Ascending aorta (tissue), 2 donors: ENCODE measurements at regions of chr10 and their contacts with region 1.

Region 1: GRCh38 chr10:23314835-23315239 is 29.8 kb downstream of the C10orf67 start:
- DNase-seq: no peak
- H3K4me3 ChIP-seq: no peak overlapping the region
- H3K27ac ChIP-seq: no peak overlapping the region
- H3K4me1 ChIP-seq: no peaks in the 10 kb centered on the region
- H3K27me3 ChIP-seq: no peaks in the 10 kb centered on the region
- CTCF ChIP-seq: peak; percentile 45 to 70 (median 64)

Region 2: GRCh38 chr10:23253780-23254179 is 61.1 kb before region 1 on chr10:
- intact Hi-C with region 1: no loop called
- DNase-seq: no peak
- H3K4me3 ChIP-seq: no peak overlapping the region
- H3K27ac ChIP-seq: no peak overlapping the region
- H3K4me1 ChIP-seq: no peaks in the 10 kb centered on the region
- H3K27me3 ChIP-seq: no peaks in the 10 kb centered on the region
- CTCF ChIP-seq: no peak

Region 3: DNA sequence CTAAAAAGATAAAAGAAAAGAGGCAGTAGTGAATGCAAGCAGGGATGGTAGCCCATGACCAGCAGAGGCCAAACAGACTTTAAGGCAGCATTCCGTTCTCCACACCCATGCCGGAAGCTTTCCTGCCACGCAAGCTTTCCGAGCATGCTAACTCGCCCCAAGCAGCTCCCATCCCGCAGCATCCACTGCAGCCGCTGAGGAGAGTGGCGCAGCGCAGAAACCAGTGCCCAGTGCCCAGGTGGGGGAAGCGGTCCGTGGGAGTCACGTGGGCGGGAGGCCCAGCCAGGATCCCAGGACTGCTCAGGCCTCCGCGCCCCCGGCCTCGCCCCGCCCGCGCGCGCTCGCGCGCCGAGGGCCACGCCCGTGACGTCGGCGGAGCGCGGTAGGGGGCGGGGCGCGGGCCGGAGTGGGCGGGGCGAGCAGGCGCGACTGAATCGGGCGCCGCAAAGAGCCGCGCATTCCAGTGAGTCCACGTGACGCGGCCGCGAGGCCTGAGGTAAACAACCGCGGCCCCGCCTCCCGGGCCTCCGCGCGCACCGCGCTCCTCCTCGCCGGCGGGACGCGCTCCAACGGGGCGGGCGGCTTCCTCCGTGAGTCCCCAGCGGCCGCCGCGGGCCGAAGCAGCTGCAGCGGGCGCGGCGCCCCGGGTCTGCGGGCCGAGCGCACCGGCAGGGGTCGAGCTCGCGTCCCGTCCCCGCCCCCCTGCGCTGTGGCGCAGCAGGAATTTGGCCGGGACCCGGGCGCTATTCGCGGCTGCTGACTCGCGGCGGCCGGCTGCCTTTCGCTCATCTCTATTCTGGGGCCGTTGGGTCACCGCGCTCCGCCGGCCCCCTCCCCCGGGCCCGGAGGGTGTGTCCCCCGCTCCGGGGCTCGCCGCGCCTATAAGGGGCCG is 124.0 kb after region 1 on chr10 and contains the start of gene OTUD1:
- intact Hi-C with region 1: no loop called
- DNase-seq: peak; percentile 82 to 98
- H3K4me3 ChIP-seq: peak within 1 kb of the TSS; percentile 91 to 96
- H3K27ac ChIP-seq: peak within 1 kb of the TSS; percentile 88 to 93
- H3K4me1 ChIP-seq: peaks cover 0 to 24% of the 10 kb centered on the region in 2 donors
- H3K27me3 ChIP-seq: no peaks in the 10 kb centered on the region
- CTCF ChIP-seq: peak in 1 of 3 experiments; percentile 26
- total RNA-seq, gene OTUD1: 24.1 TPM

Region 4: GRCh38 chr10:23525406-23525805 is 210.6 kb after region 1 on chr10:
- intact Hi-C with region 1: loop called (anchors 1 kb)
- DNase-seq: no peak
- H3K4me3 ChIP-seq: no peak overlapping the region
- H3K27ac ChIP-seq: no peak overlapping the region
- H3K4me1 ChIP-seq: no peaks in the 10 kb centered on the region
- H3K27me3 ChIP-seq: no peaks in the 10 kb centered on the region
- CTCF ChIP-seq: peak; percentile 12 to 39 (median 24)

Region 5: GRCh38 chr10:23702977-23703414 is 388.2 kb after region 1 on chr10:
- intact Hi-C with region 1: loop called (anchors 2 kb)
- DNase-seq: no peak
- H3K4me3 ChIP-seq: no peak overlapping the region
- H3K27ac ChIP-seq: no peak overlapping the region
- H3K4me1 ChIP-seq: no peaks in the 10 kb centered on the region
- H3K27me3 ChIP-seq: no peaks in the 10 kb centered on the region
- CTCF ChIP-seq: peak; percentile 23 to 48 (median 39)